HCT116 (cell line): ENCODE measurements at regions of chr17 and their contacts with region 1.

Region 1: GRCh38 chr17:16991349-16992009 is 19.6 kb upstream of the TNFRSF13B start:
- DNase-seq: peak; percentile 57
- ATAC-seq: peak; percentile 88
- H3K4me3 ChIP-seq: no peak overlapping the region; a peak in 1 of 4 replicates
- H3K27ac ChIP-seq: no peak overlapping the region; the same call in 1 of the 2 replicates
- H3K4me1 ChIP-seq: peaks cover 11 to 45% of the 10 kb centered on the region in 2 experiments
- H3K27me3 ChIP-seq: no peaks in the 10 kb centered on the region
- CTCF ChIP-seq: peak; percentile 84 to 92 (median 87)
- POLR2A ChIP-seq: no peak
- RAD21 ChIP-seq: peak; percentile 75

Region 2: DNA sequence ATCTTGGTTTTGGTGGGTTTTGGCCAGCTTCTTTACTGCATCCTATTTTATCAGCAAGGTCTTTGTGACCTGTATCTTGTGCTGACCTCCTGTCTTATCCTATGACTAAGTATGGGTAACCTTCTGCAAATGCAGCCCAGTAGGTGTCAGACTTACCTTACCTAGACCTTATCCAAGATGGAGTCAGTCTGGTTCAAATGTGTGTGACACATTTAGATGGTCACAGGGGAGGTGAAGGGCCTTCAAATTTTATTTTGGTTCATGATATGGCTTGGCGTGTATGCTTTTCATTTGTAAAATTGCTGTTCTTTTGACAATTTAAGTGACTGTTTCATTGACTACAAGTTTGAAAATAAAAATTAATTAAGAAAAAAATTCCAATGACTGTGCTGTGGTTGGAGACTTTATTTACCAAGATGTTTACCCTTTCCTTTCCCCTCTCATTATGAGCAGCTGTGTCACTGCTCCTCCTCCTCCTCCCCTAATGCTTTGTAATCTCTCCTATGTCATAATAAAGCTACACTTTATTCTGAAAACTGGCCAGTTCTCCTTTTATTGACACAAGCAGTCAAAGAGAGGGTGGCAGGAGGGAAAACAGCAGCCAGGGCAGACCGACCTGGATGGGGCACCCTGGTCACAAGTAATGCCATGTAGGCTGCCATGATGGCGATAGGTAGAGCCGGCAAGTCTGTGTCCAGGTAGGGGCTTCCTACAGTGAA is 68.9 kb before region 1 on chr17:
- CTCF ChIA-PET with region 1: no interaction called
- POLR2A ChIA-PET with region 1: no interaction called
- RAD21 ChIA-PET with region 1: no interaction called
- intact Hi-C with region 1: loop called (anchors 5 kb)
- DNase-seq: no peak
- ATAC-seq: peak; percentile 51; the same call in 1 of the 2 replicates
- H3K4me3 ChIP-seq: no peak overlapping the region
- H3K27ac ChIP-seq: no peak overlapping the region
- H3K4me1 ChIP-seq: no peaks in the 10 kb centered on the region
- H3K27me3 ChIP-seq: no peaks in the 10 kb centered on the region
- CTCF ChIP-seq: peak in 2 of 3 experiments; percentile 30; a peak in 2 of 6 replicates
- POLR2A ChIP-seq: no peak
- RAD21 ChIP-seq: peak; percentile 54; the same call in 1 of the 2 replicates

Region 3: DNA sequence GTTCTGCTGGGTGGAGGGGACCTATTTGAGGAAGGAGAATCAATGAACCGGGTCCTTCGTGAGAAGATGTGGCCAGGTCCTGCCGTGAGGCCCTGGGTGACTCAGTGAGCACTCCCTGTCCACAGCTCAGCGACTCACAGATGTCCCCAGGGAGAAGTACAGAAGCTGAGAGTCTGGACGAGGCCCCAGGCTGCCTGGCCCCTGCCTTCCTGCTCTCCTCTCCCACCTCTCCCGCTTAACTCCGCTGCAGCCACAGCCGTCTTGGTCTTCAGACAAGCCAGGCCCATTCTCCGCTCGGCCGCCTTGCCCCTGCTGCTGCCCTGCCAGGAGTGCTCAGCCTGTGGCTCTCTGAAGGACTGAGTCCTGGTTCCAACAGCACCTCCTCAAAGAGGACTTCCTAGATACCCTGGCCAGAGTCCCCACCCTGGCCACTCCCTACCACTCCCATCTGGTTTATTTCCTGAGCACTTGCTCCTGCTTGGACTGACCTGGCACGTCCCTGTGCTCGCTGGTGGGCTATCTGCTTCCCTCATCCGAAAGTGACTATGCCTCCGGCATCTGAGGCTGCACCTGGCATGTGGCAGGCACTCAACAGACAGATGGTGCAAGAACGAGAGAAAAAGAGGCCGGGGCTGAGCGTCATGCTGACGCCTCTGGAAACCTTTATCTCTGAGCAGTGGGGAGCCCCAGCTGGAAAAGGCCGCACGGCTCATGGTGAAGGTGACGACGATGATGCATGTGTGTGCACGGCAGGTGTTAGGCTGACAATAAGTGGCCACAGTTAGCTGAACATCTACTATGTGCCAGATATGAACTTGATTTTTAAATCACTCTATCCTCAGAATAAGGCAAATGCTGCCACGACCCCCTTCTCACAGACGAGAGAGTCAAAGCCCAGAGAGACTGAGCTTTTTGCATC is 10.4 kb before region 1 on chr17:
- CTCF ChIA-PET with region 1: interaction called, 15 read pairs
- POLR2A ChIA-PET with region 1: interaction called, 3 read pairs
- RAD21 ChIA-PET with region 1: no interaction called
- intact Hi-C with region 1: no loop called
- DNase-seq: no peak
- ATAC-seq: no peak
- H3K4me3 ChIP-seq: no peak overlapping the region
- H3K27ac ChIP-seq: no peak overlapping the region
- H3K4me1 ChIP-seq: peaks cover 0 to 8% of the 10 kb centered on the region in 2 experiments; a peak in 2 of 4 replicates
- H3K27me3 ChIP-seq: no peaks in the 10 kb centered on the region
- CTCF ChIP-seq: no peak
- POLR2A ChIP-seq: no peak
- RAD21 ChIP-seq: no peak

Region 4: DNA sequence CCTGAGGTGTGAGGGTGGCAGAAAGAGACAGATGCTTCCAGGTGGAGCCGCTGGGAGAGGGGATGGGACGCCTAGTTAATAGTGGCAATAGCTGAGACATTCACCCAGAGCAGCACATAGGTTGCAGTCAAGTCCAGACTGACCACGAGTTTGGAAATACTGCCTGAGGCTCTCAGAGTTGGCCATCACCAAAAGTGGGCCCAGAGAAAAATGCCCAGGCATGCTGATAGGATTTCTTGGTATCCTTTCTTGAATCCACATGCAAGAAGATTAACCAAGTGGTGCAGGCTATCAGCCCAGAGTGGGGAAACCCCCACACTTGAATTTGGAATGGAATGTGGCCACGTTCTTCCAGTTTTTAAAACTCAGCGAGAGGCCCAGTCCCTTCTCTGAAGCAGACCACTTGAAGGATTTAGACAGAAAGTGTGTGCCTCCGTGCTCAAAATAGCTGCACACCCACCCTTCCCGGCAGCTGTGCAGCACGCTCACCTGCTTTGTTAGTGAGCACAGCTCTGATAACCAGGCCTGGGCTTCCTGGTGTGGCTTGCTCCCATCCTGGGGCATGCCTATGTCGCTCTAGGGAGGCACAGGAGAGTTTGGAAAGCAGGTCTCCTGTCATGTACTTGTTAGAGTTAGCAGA is 179.0 kb after region 1 on chr17:
- CTCF ChIA-PET with region 1: no interaction called
- POLR2A ChIA-PET with region 1: no interaction called
- RAD21 ChIA-PET with region 1: no interaction called
- intact Hi-C with region 1: no loop called
- DNase-seq: no peak
- ATAC-seq: no peak
- H3K4me3 ChIP-seq: no peak overlapping the region
- H3K27ac ChIP-seq: no peak overlapping the region
- H3K4me1 ChIP-seq: no peaks in the 10 kb centered on the region
- H3K27me3 ChIP-seq: no peaks in the 10 kb centered on the region
- CTCF ChIP-seq: no peak
- POLR2A ChIP-seq: no peak
- RAD21 ChIP-seq: no peak